ENCODE measurements at regions of chr10 and their contacts with region 1.

Region 1: GRCh38 chr10:92110039-92110794 is 180.7 kb downstream of the CPEB3 start:
- DNase-seq: no peak
- H3K4me3 ChIP-seq: no peak overlapping the region
- H3K4me3 Mint-ChIP-seq: no peak overlapping the region
- H3K27ac ChIP-seq: no peak overlapping the region
- H3K27ac Mint-ChIP-seq: no peak overlapping the region
- H3K4me1 ChIP-seq: no peaks in the 10 kb centered on the region
- H3K4me1 Mint-ChIP-seq: no peaks in the 10 kb centered on the region
- H3K27me3 ChIP-seq: no peaks in the 10 kb centered on the region
- H3K27me3 Mint-ChIP-seq: no peaks in the 10 kb centered on the region

Region 2: GRCh38 chr10:92087750-92088395 is 22.3 kb before region 1 on chr10:
- CTCF ChIA-PET with region 1: no interaction called
- POLR2A ChIA-PET with region 1: no interaction called
- DNase-seq: peak; percentile 17 to 60 (median 33)
- H3K4me3 ChIP-seq: no peak overlapping the region
- H3K4me3 Mint-ChIP-seq: no peak overlapping the region
- H3K27ac ChIP-seq: no peak overlapping the region
- H3K27ac Mint-ChIP-seq: peak overlapping the region in 1 of 8 donors; percentile 70
- H3K4me1 ChIP-seq: no peaks in the 10 kb centered on the region
- H3K4me1 Mint-ChIP-seq: peaks cover 0 to 5% (median 4%) of the 10 kb centered on the region in 3 donors
- H3K27me3 ChIP-seq: no peaks in the 10 kb centered on the region
- H3K27me3 Mint-ChIP-seq: no peaks in the 10 kb centered on the region

Region 3: DNA sequence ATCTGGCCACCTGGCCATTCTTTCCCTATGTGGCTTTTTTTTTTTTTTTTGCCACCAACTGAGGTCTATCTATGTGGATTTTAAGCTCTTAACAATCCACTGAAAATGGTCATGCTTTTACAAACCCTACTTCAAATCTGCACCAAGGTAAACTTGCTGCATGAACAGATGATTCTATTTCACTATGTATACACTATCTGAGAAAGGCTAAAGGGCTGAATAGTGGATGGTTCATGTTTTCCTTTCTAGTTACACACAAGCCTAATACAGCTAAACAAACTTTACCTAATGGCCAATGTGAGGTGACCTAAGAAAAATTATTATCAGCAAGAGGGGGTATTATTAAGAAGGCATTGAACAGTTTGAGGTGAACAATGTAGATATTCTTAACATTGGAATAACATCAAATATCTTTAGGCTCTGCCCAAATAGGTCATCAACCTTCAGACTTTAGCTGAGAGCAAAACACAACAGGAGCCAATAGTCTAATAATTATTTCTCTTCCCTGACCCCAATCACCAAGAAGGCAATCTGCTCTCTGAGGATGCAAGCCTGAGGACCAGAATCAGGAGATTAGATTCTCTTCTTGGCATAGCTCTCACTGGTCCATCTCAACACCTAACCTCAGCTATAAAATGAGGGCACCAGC is 20.5 kb after region 1 on chr10:
- CTCF ChIA-PET with region 1: no interaction called
- POLR2A ChIA-PET with region 1: interaction called, 10 read pairs
- DNase-seq: no peak
- H3K4me3 ChIP-seq: no peak overlapping the region
- H3K4me3 Mint-ChIP-seq: no peak overlapping the region
- H3K27ac ChIP-seq: no peak overlapping the region
- H3K27ac Mint-ChIP-seq: no peak overlapping the region
- H3K4me1 ChIP-seq: no peaks in the 10 kb centered on the region
- H3K4me1 Mint-ChIP-seq: no peaks in the 10 kb centered on the region
- H3K27me3 ChIP-seq: no peaks in the 10 kb centered on the region
- H3K27me3 Mint-ChIP-seq: peaks cover 0 to 3% of the 10 kb centered on the region in 2 donors